Cardiac septum (tissue), 1 donor: ENCODE measurements at regions of chr20 and their contacts with region 1.

Region 1: DNA sequence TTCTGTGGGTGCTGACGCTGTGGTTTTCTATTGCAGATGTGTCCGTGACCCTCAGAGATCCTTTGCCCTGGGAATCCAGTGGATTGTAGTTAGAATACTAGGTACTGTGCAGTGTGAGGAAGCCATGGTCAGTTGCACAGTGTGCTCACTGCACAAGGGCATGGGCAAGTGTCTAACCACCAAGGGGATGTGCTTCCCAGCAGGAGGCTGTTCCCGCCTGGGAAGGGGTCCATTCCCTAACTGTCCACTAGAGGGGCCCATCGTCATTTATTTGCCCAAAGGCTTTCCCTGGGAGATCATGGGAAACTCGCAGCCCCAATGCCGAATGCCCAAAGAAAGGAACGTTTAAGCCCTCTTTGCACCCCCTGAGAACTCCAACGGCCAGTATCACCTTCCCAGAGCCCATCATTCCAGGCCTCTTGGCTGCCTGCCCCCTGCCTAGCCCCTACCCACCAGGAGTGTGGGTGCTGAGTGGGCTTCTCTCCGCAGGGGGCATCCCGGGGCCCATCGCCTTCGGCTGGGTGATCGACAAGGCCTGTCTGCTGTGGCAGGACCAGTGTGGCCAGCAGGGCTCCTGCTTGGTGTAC is 26.2 kb downstream of the SLCO4A1 start:
- DNase-seq: peak; percentile 85

Region 2: DNA sequence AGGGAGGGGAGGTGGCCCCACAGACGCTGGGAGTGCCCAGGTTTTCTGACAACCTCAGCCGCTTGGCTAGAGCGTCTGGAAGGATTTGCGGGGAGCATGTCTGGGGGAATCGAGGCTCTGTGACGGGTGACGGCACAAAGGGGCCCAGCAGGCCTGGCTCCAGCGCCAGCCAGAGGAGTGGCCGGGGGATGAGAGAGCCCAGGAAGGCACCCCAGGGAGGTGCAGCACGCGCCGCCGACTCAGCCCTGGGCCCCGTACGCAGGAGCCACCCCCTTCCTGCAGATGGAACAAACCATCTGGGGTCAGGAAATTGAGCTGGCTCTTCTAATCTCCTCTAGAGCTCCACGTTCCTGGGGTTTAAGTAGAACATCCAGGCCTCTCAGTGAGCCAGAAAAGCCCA is 32.1 kb before region 1 on chr20:
- intact Hi-C with region 1: no loop called
- DNase-seq: no peak

Region 3: GRCh38 chr20:62728781-62729300 is 60.3 kb after region 1 on chr20:
- intact Hi-C with region 1: no loop called
- DNase-seq: no peak

Region 4: GRCh38 chr20:62740286-62741141 is 72.0 kb after region 1 on chr20:
- intact Hi-C with region 1: no loop called
- DNase-seq: peak; percentile 76

Region 5: DNA sequence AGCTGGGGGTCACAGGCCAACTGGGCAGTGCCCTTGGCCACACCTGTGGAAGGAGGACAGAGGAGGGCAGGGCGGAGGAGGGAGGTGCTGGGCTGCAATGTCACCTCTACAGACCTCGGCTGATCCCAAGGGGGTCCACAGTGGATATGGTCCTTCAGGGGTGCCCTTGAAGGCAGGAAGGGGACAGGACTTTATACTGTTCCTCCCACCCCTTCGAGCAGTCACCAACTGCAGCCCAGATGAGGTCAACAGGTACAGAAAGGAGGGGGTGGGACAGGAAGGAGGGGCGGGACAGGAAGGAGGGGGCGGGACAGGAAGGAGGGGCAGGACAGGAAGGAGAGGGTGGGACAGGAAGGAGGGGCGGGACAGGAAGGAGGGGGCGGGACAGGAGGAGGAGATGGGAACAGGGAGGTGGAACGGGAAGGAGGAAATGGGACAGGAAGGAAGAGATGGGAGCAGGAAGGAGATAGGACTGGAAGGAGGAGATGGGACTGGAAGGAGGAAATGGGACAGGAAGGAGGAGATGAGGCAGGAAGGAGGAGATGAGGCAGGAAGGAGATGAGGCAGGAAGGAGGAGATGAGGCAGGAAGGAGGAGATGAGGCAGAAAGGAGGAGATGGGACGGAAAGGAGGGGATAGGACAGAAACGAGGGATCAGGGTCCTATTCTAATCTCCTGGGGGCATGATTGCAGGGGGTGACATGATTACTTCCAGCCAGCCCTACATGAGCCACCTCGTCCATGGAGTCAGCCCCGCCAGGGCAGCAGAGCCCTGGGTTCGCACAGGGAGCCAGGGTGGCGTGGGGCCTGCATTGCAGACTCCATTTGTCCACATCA is 108.4 kb after region 1 on chr20:
- intact Hi-C with region 1: no loop called
- DNase-seq: no peak

Region 6: GRCh38 chr20:62793912-62794724 is 125.6 kb after region 1 on chr20:
- intact Hi-C with region 1: loop called (anchors 1 kb)
- DNase-seq: peak; percentile 99

Region 7: DNA sequence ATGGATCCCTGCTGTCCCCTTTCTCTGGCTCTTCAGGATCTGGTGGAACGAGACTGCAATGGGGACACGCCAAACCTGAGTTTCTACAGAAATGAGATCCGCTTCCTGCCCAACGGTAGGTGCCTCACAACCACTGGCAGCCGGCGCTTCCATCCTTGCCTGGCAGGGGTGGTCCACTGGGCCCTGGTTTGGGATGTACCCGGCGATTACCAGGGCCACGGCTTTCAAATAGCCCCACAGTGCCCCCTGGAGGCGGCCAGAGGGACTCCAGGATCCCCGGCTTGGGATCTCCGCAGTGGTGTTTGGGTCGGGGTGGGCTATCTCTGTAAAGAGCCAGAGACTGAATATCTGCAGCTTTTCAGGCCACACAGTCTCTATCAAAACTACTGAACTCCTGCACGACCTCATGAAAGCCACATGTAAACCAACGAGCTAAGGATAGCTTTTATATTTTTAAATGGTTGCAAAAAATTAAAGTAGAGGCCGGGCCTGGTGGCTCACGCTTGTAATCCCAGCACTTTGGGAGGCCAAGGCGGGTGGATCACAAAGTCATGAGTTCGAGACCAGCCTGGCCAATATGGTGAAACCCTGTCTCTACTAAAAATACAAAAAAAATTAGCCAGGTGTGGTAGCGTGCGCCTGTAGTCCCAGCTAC is 139.8 kb after region 1 on chr20:
- intact Hi-C with region 1: loop called (anchors 5 kb)
- DNase-seq: peak; percentile 87